Naive thymus-derived CD8-positive, alpha-beta T cell (primary cell): ENCODE measurements at regions of chr1 and their contacts with region 1.

Region 1: GRCh38 chr1:193121616-193122593 is at the start of gene CDC73:
- DNase-seq: peak; percentile 97 to 100 (median 99)
- ATAC-seq: peak; percentile 93 to 94
- H3K4me3 Mint-ChIP-seq: peak within 1 kb of the TSS; percentile 90 to 100 (median 96)
- H3K27ac Mint-ChIP-seq: peak within 1 kb of the TSS; percentile 95 to 99 (median 98)
- H3K4me1 Mint-ChIP-seq: peaks cover 8 to 55% (median 45%) of the 10 kb centered on the region in 4 donors
- H3K27me3 Mint-ChIP-seq: no peaks in the 10 kb centered on the region
- polyA plus RNA-seq, gene CDC73: 50.5 to 67.0 (median 55.0) TPM

Region 2: DNA sequence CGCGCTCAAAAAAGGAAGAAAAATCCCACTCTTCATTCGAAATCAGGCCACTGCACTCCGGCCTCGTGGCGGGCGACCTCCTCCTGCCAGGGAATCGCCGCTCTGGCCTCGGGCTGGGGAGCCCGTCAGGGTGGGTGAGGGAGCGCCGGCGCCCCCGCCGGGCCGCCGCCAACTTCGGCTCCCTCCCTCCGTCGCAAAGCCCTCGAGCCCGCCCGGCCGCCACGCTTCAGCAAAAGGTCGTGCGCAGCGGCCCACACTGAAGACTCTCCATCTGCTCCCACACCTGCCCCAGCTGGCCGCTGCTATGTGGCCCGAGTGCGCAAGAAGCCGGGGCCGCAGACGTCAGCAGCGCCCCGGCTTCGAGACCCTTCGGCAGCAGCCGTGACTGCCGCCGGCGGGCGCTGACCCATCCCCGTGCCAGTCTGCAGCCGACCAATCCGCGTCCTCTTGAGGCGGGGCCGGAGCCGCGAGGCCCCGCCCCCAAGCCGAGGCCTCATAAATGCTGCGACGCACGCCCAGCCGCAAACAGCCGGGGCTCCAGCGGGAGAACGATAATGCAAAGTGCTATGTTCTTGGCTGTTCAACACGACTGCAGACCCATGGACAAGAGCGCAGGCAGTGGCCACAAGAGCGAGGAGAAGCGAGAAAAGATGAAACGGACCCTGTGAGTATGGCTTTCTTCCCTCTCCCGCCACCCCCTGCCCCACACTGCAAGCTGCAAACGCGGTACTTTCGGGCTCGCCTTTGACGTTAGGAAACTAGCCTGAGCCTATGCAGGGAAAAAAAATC is 313.2 kb before region 1 on chr1 and contains the start of gene RGS2:
- POLR2A ChIA-PET with region 1: interaction called, 14 read pairs
- DNase-seq: peak; percentile 81 to 93 (median 85)
- ATAC-seq: peak; percentile 91 to 92
- H3K4me3 Mint-ChIP-seq: peak within 1 kb of the TSS; percentile 93 to 100 (median 98)
- H3K27ac Mint-ChIP-seq: peak within 1 kb of the TSS; percentile 93 to 99 (median 98)
- H3K4me1 Mint-ChIP-seq: peaks cover 11 to 41% (median 28%) of the 10 kb centered on the region in 4 donors
- H3K27me3 Mint-ChIP-seq: peaks cover 0 to 2% (median 0%) of the 10 kb centered on the region in 5 donors
- polyA plus RNA-seq, gene RGS2: 19.3 to 74.8 (median 25.0) TPM

Region 3: GRCh38 chr1:193059268-193060225 is 62.4 kb before region 1 on chr1 and contains the starts of genes RO60 and UCHL5:
- POLR2A ChIA-PET with region 1: interaction called, 30 read pairs
- DNase-seq: peak; percentile 82 to 96 (median 92)
- ATAC-seq: peak; percentile 95 to 96
- H3K4me3 Mint-ChIP-seq: peak within 1 kb of the TSS; percentile 92 to 100 (median 98)
- H3K27ac Mint-ChIP-seq: peak within 1 kb of the TSS; percentile 96 to 100 (median 98)
- H3K4me1 Mint-ChIP-seq: peaks cover 28 to 71% (median 64%) of the 10 kb centered on the region in 4 donors
- H3K27me3 Mint-ChIP-seq: no peaks in the 10 kb centered on the region
- polyA plus RNA-seq, gene RO60: 89.4 to 128 (median 104) TPM
- polyA plus RNA-seq, gene UCHL5: 52.7 to 65.5 (median 63.8) TPM

Region 4: DNA sequence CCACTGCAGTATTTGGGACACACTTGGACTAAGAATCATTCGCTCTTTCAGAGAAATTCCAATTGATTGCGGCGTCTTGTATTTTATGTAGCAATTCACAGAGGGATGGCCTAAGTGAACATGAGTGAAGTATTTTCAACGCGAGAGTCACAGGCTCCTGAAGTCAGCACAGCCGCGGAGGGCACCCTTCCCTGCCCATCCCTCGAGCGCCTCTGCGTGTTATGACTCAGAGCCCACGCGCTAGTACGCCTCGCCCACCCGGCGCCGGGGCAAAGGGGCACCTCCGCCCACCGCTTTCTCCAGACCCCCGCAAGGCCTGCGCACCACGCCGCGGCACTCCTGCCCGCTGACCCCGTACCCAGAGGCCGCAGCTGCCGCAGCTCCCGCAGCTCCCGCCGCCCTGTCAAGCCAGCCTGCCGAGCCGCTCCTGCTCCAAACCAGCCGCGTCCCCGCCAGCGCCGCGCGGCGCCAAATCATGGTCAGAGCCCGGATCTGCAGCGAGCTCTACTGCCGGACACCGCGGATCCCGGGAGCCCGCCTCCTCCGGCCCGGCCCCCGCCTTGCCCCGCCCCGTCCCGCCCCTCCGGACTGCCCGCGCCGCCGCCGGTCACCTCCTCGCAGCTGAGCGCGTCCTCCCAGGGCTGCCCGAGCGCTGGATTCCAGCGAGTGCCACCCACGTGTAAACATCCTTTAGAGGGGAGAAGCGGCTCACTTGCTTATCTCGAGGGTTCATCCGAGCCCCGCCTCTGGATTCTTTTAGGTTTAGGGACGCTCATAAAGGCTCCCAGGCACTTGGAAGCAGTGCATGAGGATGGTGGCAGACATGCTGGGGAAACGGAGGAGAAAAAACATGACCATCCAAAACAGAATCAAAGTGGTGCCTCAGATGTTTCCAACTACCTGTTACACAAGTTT is 16.7 kb before region 1 on chr1 and contains the start of gene GLRX2:
- POLR2A ChIA-PET with region 1: interaction called, 21 read pairs
- DNase-seq: peak; percentile 40 to 84 (median 54)
- ATAC-seq: peak; percentile 94 to 95
- H3K4me3 Mint-ChIP-seq: peak within 1 kb of the TSS; percentile 87 to 98 (median 92)
- H3K27ac Mint-ChIP-seq: peak within 1 kb of the TSS; percentile 22 to 96 (median 91)
- H3K4me1 Mint-ChIP-seq: peaks cover 6 to 26% (median 23%) of the 10 kb centered on the region in 4 donors
- H3K27me3 Mint-ChIP-seq: no peaks in the 10 kb centered on the region
- polyA plus RNA-seq, gene GLRX2: 7.0 to 12.8 (median 9.4) TPM